MCF 10A (cell line): ENCODE measurements at regions of chr5 and their contacts with region 1.

Region 1: GRCh38 chr5:54905943-54906537 is 79.4 kb downstream of the ESM1 start:
- DNase-seq: peak; percentile 69
- H3K4me3 Mint-ChIP-seq: no peak overlapping the region
- H3K27ac Mint-ChIP-seq: no peak overlapping the region
- H3K4me1 Mint-ChIP-seq: no peaks in the 10 kb centered on the region
- H3K27me3 Mint-ChIP-seq: peaks cover 32% of the 10 kb centered on the region
- CTCF ChIP-seq: peak; percentile 61

Region 2: DNA sequence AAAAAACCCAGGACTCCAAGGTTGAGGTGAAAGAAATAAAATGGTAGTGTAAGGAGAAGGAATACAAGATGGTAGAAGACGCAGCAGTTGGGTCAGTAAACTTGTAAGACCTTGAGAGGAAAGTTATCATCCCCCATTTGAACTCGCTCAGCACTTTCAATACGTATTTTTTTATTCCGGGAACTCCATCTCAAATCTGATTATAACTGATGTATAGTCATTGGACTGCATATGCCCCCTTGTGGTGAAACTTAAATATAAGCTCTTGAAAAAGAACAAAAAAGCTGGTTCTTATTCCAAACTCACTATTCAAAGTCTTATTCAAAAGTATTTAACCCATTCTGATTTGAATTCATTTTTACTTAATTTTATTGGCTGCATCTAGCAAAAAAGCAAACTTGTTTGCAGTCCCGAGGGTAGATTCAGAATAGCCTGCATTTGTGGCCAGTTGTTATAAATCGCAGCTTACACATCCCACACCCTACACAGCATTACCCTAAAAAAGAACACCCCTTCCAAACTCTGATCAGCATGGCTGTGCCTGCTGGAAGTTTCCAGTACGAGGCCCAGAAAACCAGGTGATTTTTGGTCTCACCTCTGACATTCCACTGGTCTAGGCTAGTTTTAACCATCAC is 38.6 kb before region 1 on chr5:
- CTCF ChIA-PET with region 1: interaction called, 19 read pairs
- POLR2A ChIA-PET with region 1: no interaction called
- intact Hi-C with region 1: no loop called
- DNase-seq: peak; percentile 57
- H3K4me3 Mint-ChIP-seq: peak overlapping the region; percentile 44
- H3K27ac Mint-ChIP-seq: no peak overlapping the region
- H3K4me1 Mint-ChIP-seq: peaks cover 6% of the 10 kb centered on the region
- H3K27me3 Mint-ChIP-seq: peaks cover 13% of the 10 kb centered on the region
- CTCF ChIP-seq: peak; percentile 49

Region 3: GRCh38 chr5:54927097-54927746 is 21.2 kb after region 1 on chr5:
- CTCF ChIA-PET with region 1: interaction called, 13 read pairs
- POLR2A ChIA-PET with region 1: no interaction called
- intact Hi-C with region 1: no loop called
- DNase-seq: no peak
- H3K4me3 Mint-ChIP-seq: no peak overlapping the region
- H3K27ac Mint-ChIP-seq: no peak overlapping the region
- H3K4me1 Mint-ChIP-seq: no peaks in the 10 kb centered on the region
- H3K27me3 Mint-ChIP-seq: peaks cover 7% of the 10 kb centered on the region
- CTCF ChIP-seq: no peak

Region 4: GRCh38 chr5:55146543-55147151 is 240.6 kb after region 1 on chr5:
- CTCF ChIA-PET with region 1: interaction called, 46 read pairs
- POLR2A ChIA-PET with region 1: interaction called, 9 read pairs
- intact Hi-C with region 1: loop called (anchors 1 kb)
- DNase-seq: peak; percentile 90
- H3K4me3 Mint-ChIP-seq: no peak overlapping the region
- H3K27ac Mint-ChIP-seq: no peak overlapping the region
- H3K4me1 Mint-ChIP-seq: no peaks in the 10 kb centered on the region
- H3K27me3 Mint-ChIP-seq: peaks cover 63% of the 10 kb centered on the region
- CTCF ChIP-seq: peak; percentile 89

Region 5: DNA sequence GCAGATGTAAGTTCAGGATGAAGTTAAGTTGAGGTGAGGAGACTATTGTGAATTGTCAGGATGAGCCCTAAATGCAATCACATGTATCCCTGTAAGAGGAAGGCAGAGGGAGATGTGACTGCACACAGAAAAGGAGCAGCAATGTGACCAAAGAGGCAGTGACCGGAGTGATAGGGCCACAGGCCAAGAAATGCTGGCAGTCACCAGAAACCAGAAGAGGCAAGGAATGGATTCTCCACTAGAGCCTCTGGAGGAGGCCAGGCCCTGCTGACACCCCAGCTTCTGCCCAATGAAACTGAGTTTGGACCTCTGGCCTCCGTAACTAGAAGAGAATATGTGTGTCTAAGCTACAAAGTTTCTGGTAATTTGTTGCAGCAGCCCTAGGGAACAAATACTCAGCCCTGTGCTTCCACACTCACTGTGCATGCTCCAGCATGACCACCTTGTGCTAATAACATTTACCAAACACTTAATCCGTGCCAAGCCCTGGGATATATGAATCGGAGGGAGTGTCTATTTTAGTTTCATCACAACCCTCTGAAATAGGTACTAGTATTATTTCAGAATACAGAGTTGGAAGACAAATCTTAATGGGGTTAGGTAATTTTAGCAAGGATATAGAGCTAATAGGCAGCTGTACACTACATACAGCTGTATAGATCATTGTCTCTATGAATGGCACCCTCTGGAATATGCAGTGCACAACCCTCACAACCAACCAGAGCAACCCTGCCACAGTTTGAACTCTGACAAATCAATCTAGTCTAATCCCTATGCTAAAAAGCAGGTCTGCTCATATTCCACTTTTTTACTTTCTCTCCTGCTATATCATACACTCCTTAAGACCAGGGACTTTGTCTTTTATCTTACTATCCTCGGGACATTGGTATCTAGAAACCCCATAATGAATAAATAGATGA is 246.1 kb after region 1 on chr5:
- CTCF ChIA-PET with region 1: interaction called, 46 read pairs
- POLR2A ChIA-PET with region 1: interaction called, 3 read pairs
- intact Hi-C with region 1: no loop called
- DNase-seq: peak; percentile 66
- H3K4me3 Mint-ChIP-seq: no peak overlapping the region
- H3K27ac Mint-ChIP-seq: no peak overlapping the region
- H3K4me1 Mint-ChIP-seq: peaks cover 6% of the 10 kb centered on the region
- H3K27me3 Mint-ChIP-seq: peaks cover 39% of the 10 kb centered on the region
- CTCF ChIP-seq: no peak